Activated CD4-positive, alpha-beta T cell treated with anti-CD3 and anti-CD28 coated beads for 36 hours (primary cell): ENCODE measurements at regions of chr14 and their contacts with region 1.

Region 1: DNA sequence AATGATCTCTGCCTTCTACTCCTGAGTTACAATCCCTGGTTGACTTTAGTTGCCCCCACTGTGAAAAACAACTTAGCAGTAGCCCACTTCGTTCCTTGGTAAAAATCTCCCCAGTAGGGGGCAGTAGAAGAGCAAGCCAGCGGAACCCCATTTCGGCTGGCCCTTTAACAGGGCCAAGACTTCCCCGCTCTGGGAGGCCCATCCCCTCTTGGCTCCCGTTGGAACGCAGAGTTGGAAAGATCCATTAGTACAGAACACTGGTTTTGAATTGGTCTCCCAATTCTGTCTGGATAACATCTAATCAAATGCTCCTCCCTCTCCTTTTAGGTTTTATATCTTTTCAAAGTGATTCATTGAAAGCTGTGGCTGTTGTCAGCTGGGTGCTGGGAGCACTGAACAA is 1133.3 kb downstream of the BCL11B start:
- DNase-seq: peak; percentile 76
- ATAC-seq: peak; percentile 43
- H3K4me3 Mint-ChIP-seq: peak overlapping the region; percentile 65
- H3K27ac Mint-ChIP-seq: peak overlapping the region; percentile 98
- H3K4me1 Mint-ChIP-seq: peaks cover 87% of the 10 kb centered on the region
- H3K27me3 Mint-ChIP-seq: no peaks in the 10 kb centered on the region

Region 2: GRCh38 chr14:97687939-97688630 is 450.6 kb before region 1 on chr14:
- CTCF ChIA-PET with region 1: no interaction called
- POLR2A ChIA-PET with region 1: no interaction called
- intact Hi-C with region 1: no loop called
- DNase-seq: no peak
- ATAC-seq: no peak
- H3K4me3 Mint-ChIP-seq: no peak overlapping the region
- H3K27ac Mint-ChIP-seq: no peak overlapping the region
- H3K4me1 Mint-ChIP-seq: peaks cover 10% of the 10 kb centered on the region
- H3K27me3 Mint-ChIP-seq: no peaks in the 10 kb centered on the region

Region 3: GRCh38 chr14:97724265-97724731 is 414.4 kb before region 1 on chr14:
- CTCF ChIA-PET with region 1: interaction called, 5 read pairs
- POLR2A ChIA-PET with region 1: no interaction called
- intact Hi-C with region 1: loop called in 1 of 2 experiments (anchors 5 kb)
- DNase-seq: peak; percentile 63
- ATAC-seq: peak; percentile 93
- H3K4me3 Mint-ChIP-seq: peak overlapping the region; percentile 72
- H3K27ac Mint-ChIP-seq: peak overlapping the region; percentile 98
- H3K4me1 Mint-ChIP-seq: peaks cover 76% of the 10 kb centered on the region
- H3K27me3 Mint-ChIP-seq: no peaks in the 10 kb centered on the region

Region 4: DNA sequence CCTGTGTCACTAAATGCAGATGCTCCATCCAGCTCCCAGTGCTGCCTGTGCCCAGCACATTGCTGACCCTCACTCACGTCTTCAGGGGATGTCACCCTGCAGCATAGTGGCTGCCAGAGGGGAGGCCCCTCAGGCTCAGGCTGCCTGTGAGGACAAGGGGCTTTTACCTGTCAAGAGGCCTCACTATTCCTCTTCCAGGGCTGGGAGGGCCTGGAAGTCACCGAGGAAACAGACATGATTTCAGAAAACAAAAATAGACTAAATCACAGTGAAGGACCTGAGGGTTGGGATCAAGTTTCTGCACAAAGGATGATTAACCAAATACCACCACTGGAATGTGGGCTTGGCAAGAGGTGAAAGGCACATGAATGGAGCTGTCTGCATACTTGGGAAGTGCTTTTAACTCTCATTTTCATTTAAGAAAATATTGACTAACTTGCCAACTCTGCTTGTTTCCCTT is 68.9 kb before region 1 on chr14:
- CTCF ChIA-PET with region 1: no interaction called
- POLR2A ChIA-PET with region 1: no interaction called
- intact Hi-C with region 1: no loop called
- DNase-seq: no peak
- ATAC-seq: no peak
- H3K4me3 Mint-ChIP-seq: no peak overlapping the region
- H3K27ac Mint-ChIP-seq: no peak overlapping the region
- H3K4me1 Mint-ChIP-seq: peaks cover 3% of the 10 kb centered on the region
- H3K27me3 Mint-ChIP-seq: no peaks in the 10 kb centered on the region

Region 5: GRCh38 chr14:98120831-98121464 is 17.7 kb before region 1 on chr14:
- CTCF ChIA-PET with region 1: interaction called, 25 read pairs
- POLR2A ChIA-PET with region 1: no interaction called
- intact Hi-C with region 1: no loop called
- DNase-seq: peak; percentile 52
- ATAC-seq: peak; percentile 99
- H3K4me3 Mint-ChIP-seq: no peak overlapping the region
- H3K27ac Mint-ChIP-seq: peak overlapping the region; percentile 74
- H3K4me1 Mint-ChIP-seq: peaks cover 30% of the 10 kb centered on the region
- H3K27me3 Mint-ChIP-seq: no peaks in the 10 kb centered on the region

Region 6: GRCh38 chr14:98173305-98173704 is 34.6 kb after region 1 on chr14:
- CTCF ChIA-PET with region 1: interaction called, 15 read pairs
- POLR2A ChIA-PET with region 1: interaction called, 13 read pairs
- intact Hi-C with region 1: loop called (anchors 2 kb)
- DNase-seq: peak; percentile 70
- ATAC-seq: no peak
- H3K4me3 Mint-ChIP-seq: peak overlapping the region; percentile 50
- H3K27ac Mint-ChIP-seq: peak overlapping the region; percentile 99
- H3K4me1 Mint-ChIP-seq: peaks cover 99% of the 10 kb centered on the region
- H3K27me3 Mint-ChIP-seq: no peaks in the 10 kb centered on the region

Region 7: GRCh38 chr14:98227000-98227726 is 88.5 kb after region 1 on chr14:
- CTCF ChIA-PET with region 1: interaction called, 6 read pairs
- POLR2A ChIA-PET with region 1: interaction called, 3 read pairs
- intact Hi-C with region 1: loop called in 1 of 2 experiments (anchors 5 kb)
- DNase-seq: peak; percentile 75
- ATAC-seq: peak; percentile 70
- H3K4me3 Mint-ChIP-seq: peak overlapping the region; percentile 45
- H3K27ac Mint-ChIP-seq: peak overlapping the region; percentile 95
- H3K4me1 Mint-ChIP-seq: peaks cover 88% of the 10 kb centered on the region
- H3K27me3 Mint-ChIP-seq: no peaks in the 10 kb centered on the region

Region 8: GRCh38 chr14:99192028-99192621 is 1053.5 kb after region 1 on chr14:
- CTCF ChIA-PET with region 1: interaction called, 4 read pairs
- POLR2A ChIA-PET with region 1: no interaction called
- intact Hi-C with region 1: loop called in 1 of 2 experiments (anchors 2 kb)
- DNase-seq: no peak
- ATAC-seq: peak; percentile 8
- H3K4me3 Mint-ChIP-seq: peak overlapping the region; percentile 79
- H3K27ac Mint-ChIP-seq: peak overlapping the region; percentile 99
- H3K4me1 Mint-ChIP-seq: peaks cover 89% of the 10 kb centered on the region
- H3K27me3 Mint-ChIP-seq: no peaks in the 10 kb centered on the region